Activated B cell treated with CpG ODN at 0.5 μM for 24 hours (primary cell): ENCODE measurements at regions of chr1 and their contacts with region 1.

Region 1: GRCh38 chr1:66360285-66360724 is 173.6 kb upstream of the SGIP1 start:
- DNase-seq: no peak
- ATAC-seq: peak; percentile 64
- H3K4me3 Mint-ChIP-seq: no peak overlapping the region
- H3K27ac Mint-ChIP-seq: peak overlapping the region; percentile 77
- H3K4me1 Mint-ChIP-seq: peaks cover 84% of the 10 kb centered on the region
- H3K27me3 Mint-ChIP-seq: no peaks in the 10 kb centered on the region
- CTCF ChIP-seq: no peak

Region 2: GRCh38 chr1:65958561-65959350 is 401.5 kb before region 1 on chr1:
- CTCF ChIA-PET with region 1: no interaction called
- POLR2A ChIA-PET with region 1: no interaction called
- intact Hi-C with region 1: loop called (anchors 5 kb)
- DNase-seq: no peak
- ATAC-seq: peak; percentile 40
- H3K4me3 Mint-ChIP-seq: no peak overlapping the region
- H3K27ac Mint-ChIP-seq: no peak overlapping the region
- H3K4me1 Mint-ChIP-seq: peaks cover 4% of the 10 kb centered on the region
- H3K27me3 Mint-ChIP-seq: no peaks in the 10 kb centered on the region
- CTCF ChIP-seq: peak; percentile 44

Region 3: GRCh38 chr1:66182551-66183178 is 177.6 kb before region 1 on chr1:
- CTCF ChIA-PET with region 1: no interaction called
- POLR2A ChIA-PET with region 1: no interaction called
- intact Hi-C with region 1: no loop called
- DNase-seq: no peak
- ATAC-seq: no peak
- H3K4me3 Mint-ChIP-seq: no peak overlapping the region
- H3K27ac Mint-ChIP-seq: no peak overlapping the region
- H3K4me1 Mint-ChIP-seq: no peaks in the 10 kb centered on the region
- H3K27me3 Mint-ChIP-seq: peaks cover 3% of the 10 kb centered on the region
- CTCF ChIP-seq: no peak

Region 4: GRCh38 chr1:66339944-66340343 is 20.4 kb before region 1 on chr1:
- CTCF ChIA-PET with region 1: interaction called, 3 read pairs
- POLR2A ChIA-PET with region 1: interaction called, 11 read pairs
- intact Hi-C with region 1: loop called (anchors 2 kb)
- DNase-seq: no peak
- ATAC-seq: no peak
- H3K4me3 Mint-ChIP-seq: peak overlapping the region; percentile 64
- H3K27ac Mint-ChIP-seq: peak overlapping the region; percentile 83
- H3K4me1 Mint-ChIP-seq: peaks cover 86% of the 10 kb centered on the region
- H3K27me3 Mint-ChIP-seq: no peaks in the 10 kb centered on the region
- CTCF ChIP-seq: no peak

Region 5: GRCh38 chr1:66350001-66350547 is 10.2 kb before region 1 on chr1:
- CTCF ChIA-PET with region 1: interaction called, 6 read pairs
- POLR2A ChIA-PET with region 1: interaction called, 13 read pairs
- intact Hi-C with region 1: loop called (anchors 2 kb)
- DNase-seq: no peak
- ATAC-seq: peak; percentile 80
- H3K4me3 Mint-ChIP-seq: peak overlapping the region; percentile 72
- H3K27ac Mint-ChIP-seq: peak overlapping the region; percentile 89
- H3K4me1 Mint-ChIP-seq: peaks cover 97% of the 10 kb centered on the region
- H3K27me3 Mint-ChIP-seq: no peaks in the 10 kb centered on the region
- CTCF ChIP-seq: no peak

Region 6: GRCh38 chr1:66402194-66402593 is 41.9 kb after region 1 on chr1:
- CTCF ChIA-PET with region 1: interaction called, 10 read pairs
- POLR2A ChIA-PET with region 1: interaction called, 9 read pairs
- intact Hi-C with region 1: no loop called
- DNase-seq: peak; percentile 65
- ATAC-seq: peak; percentile 86
- H3K4me3 Mint-ChIP-seq: peak overlapping the region; percentile 72
- H3K27ac Mint-ChIP-seq: peak overlapping the region; percentile 90
- H3K4me1 Mint-ChIP-seq: peaks cover 67% of the 10 kb centered on the region
- H3K27me3 Mint-ChIP-seq: no peaks in the 10 kb centered on the region
- CTCF ChIP-seq: no peak